ENCODE measurements at regions of chr4 and their contacts with region 1.

Region 1: GRCh38 chr4:145618932-145619638 is at the start of gene MMAA:
- DNase-seq: peak; percentile 97
- H3K4me3 Mint-ChIP-seq: peak within 1 kb of the TSS; percentile 94
- H3K27ac Mint-ChIP-seq: peak within 1 kb of the TSS; percentile 100
- H3K4me1 Mint-ChIP-seq: peaks cover 46% of the 10 kb centered on the region
- H3K27me3 Mint-ChIP-seq: no peaks in the 10 kb centered on the region
- total RNA-seq, gene MMAA: 24.4 to 25.1 TPM

Region 2: GRCh38 chr4:144174401-144175067 is 1444.6 kb before region 1 on chr4:
- CTCF ChIA-PET with region 1: no interaction called
- POLR2A ChIA-PET with region 1: no interaction called
- intact Hi-C with region 1: loop called (anchors 2 kb)
- DNase-seq: peak; percentile 40
- H3K4me3 Mint-ChIP-seq: no peak overlapping the region
- H3K27ac Mint-ChIP-seq: peak overlapping the region; percentile 70
- H3K4me1 Mint-ChIP-seq: peaks cover 18% of the 10 kb centered on the region
- H3K27me3 Mint-ChIP-seq: peaks cover 3% of the 10 kb centered on the region

Region 3: DNA sequence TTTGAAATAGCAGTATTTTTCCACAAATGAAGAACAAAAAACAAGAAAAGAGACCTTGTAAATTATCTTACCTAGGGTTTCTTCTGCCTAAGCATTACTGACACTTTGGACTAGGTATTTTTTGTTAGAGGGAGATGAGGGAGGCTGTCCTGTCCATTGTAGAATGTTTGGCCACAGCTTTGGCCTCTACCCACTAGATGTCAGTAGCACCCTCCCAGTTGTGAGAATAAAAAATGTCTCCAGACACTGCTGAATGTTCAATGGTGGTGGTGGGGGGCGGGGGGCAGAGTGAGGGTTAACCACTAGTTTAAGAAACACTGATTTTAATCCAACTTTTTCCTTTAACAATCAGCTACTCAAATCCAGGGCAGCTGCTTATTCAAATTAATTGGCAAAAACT is 464.5 kb before region 1 on chr4:
- CTCF ChIA-PET with region 1: no interaction called
- POLR2A ChIA-PET with region 1: no interaction called
- intact Hi-C with region 1: no loop called
- DNase-seq: no peak
- H3K4me3 Mint-ChIP-seq: no peak overlapping the region
- H3K27ac Mint-ChIP-seq: no peak overlapping the region
- H3K4me1 Mint-ChIP-seq: peaks cover 6% of the 10 kb centered on the region
- H3K27me3 Mint-ChIP-seq: no peaks in the 10 kb centered on the region

Region 4: DNA sequence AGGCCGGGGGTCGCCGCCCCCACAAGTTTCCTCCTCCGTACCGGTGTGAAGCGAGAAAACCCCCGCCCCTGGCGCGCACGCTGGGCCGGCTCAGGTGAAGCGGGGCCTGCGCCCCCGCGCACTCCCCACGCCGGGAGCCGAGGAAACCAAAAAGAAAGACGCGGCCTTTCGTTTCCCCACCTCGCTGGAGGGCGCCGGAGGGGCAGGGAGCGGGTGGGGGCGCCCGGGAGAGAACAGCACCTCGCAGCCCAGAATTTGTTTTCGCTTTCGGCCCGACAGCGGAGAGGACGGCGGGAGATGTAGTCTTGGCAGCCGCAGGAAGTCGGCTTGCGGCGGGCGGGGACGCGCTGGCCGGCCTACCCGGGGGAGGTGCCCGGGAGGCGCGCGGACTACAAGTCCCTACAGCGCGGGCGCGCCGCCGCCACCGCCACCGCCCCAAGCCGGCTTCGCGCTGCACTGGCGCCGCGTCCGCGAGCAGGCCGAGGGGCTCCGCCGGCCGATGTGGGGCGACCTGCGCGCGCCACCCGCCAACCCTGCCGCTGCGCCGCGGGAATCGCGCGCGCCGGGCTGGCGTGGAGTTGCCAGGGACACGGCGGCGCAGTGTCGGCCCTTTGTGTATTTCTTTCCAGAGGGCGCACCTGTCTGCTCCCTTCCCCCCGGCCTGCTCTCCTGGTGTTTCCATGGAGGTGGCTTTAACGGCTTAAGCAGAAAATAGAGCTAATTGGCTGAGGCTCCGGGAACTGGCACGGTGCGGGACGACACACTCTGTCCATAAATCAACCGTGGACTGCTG is 438.6 kb before region 1 on chr4 and contains the start of gene OTUD4:
- CTCF ChIA-PET with region 1: interaction called, 6 read pairs
- POLR2A ChIA-PET with region 1: interaction called, 4 read pairs
- intact Hi-C with region 1: loop called (anchors 1 kb)
- DNase-seq: peak; percentile 97
- H3K4me3 Mint-ChIP-seq: peak within 1 kb of the TSS; percentile 96
- H3K27ac Mint-ChIP-seq: peak within 1 kb of the TSS; percentile 98
- H3K4me1 Mint-ChIP-seq: peaks cover 25% of the 10 kb centered on the region
- H3K27me3 Mint-ChIP-seq: no peaks in the 10 kb centered on the region
- total RNA-seq, gene OTUD4: 41.5 to 43.3 TPM

Region 5: GRCh38 chr4:145481164-145481941 is 137.7 kb before region 1 on chr4 and contains the start of gene SMAD1:
- CTCF ChIA-PET with region 1: no interaction called
- POLR2A ChIA-PET with region 1: no interaction called
- intact Hi-C with region 1: loop called (anchors 1 kb)
- DNase-seq: peak; percentile 53
- H3K4me3 Mint-ChIP-seq: peak within 1 kb of the TSS; percentile 66
- H3K27ac Mint-ChIP-seq: no peak within 1 kb of the TSS
- H3K4me1 Mint-ChIP-seq: peaks cover 8% of the 10 kb centered on the region
- H3K27me3 Mint-ChIP-seq: peaks cover 38% of the 10 kb centered on the region
- total RNA-seq, gene SMAD1: 2.8 to 2.9 TPM

Region 6: GRCh38 chr4:145732895-145733880 is 114.1 kb after region 1 on chr4:
- CTCF ChIA-PET with region 1: no interaction called
- POLR2A ChIA-PET with region 1: no interaction called
- intact Hi-C with region 1: loop called (anchors 1 kb)
- DNase-seq: peak; percentile 92
- H3K4me3 Mint-ChIP-seq: peak overlapping the region; percentile 69
- H3K27ac Mint-ChIP-seq: peak overlapping the region; percentile 62
- H3K4me1 Mint-ChIP-seq: peaks cover 29% of the 10 kb centered on the region
- H3K27me3 Mint-ChIP-seq: peaks cover 6% of the 10 kb centered on the region

Region 7: GRCh38 chr4:145868637-145869409 is 249.7 kb after region 1 on chr4:
- CTCF ChIA-PET with region 1: no interaction called
- POLR2A ChIA-PET with region 1: no interaction called
- intact Hi-C with region 1: loop called (anchors 10 kb)
- DNase-seq: no peak
- H3K4me3 Mint-ChIP-seq: no peak overlapping the region
- H3K27ac Mint-ChIP-seq: no peak overlapping the region
- H3K4me1 Mint-ChIP-seq: peaks cover 29% of the 10 kb centered on the region
- H3K27me3 Mint-ChIP-seq: no peaks in the 10 kb centered on the region

Region 8: GRCh38 chr4:146458594-146458993 is 839.5 kb after region 1 on chr4:
- CTCF ChIA-PET with region 1: no interaction called
- POLR2A ChIA-PET with region 1: no interaction called
- intact Hi-C with region 1: loop called (anchors 1 kb)
- DNase-seq: no peak
- H3K4me3 Mint-ChIP-seq: peak overlapping the region; percentile 46
- H3K27ac Mint-ChIP-seq: peak overlapping the region; percentile 89
- H3K4me1 Mint-ChIP-seq: peaks cover 17% of the 10 kb centered on the region
- H3K27me3 Mint-ChIP-seq: no peaks in the 10 kb centered on the region